HEK293 (cell line): ENCODE measurements at regions of chrX and their contacts with region 1.

Region 1: GRCh38 chrX:16719334-16720084 is at the start of gene SYAP1:
- H3K4me3 ChIP-seq: peak within 1 kb of the TSS; percentile 89
- H3K27ac ChIP-seq: peak within 1 kb of the TSS; percentile 81
- H3K4me1 ChIP-seq: no peaks in the 10 kb centered on the region; the same call in 1 of the 2 replicates
- CTCF ChIP-seq: peak; percentile 30

Region 2: GRCh38 chrX:16320765-16321355 is 398.6 kb before region 1 on chrX:
- CTCF ChIA-PET with region 1: no interaction called
- POLR2A ChIA-PET with region 1: no interaction called
- H3K4me3 ChIP-seq: no peak overlapping the region
- H3K27ac ChIP-seq: no peak overlapping the region
- H3K4me1 ChIP-seq: no peaks in the 10 kb centered on the region
- CTCF ChIP-seq: no peak

Region 3: GRCh38 chrX:16687514-16687913 is 32.0 kb before region 1 on chrX:
- CTCF ChIA-PET with region 1: no interaction called
- POLR2A ChIA-PET with region 1: no interaction called
- H3K4me3 ChIP-seq: no peak overlapping the region
- H3K27ac ChIP-seq: no peak overlapping the region
- H3K4me1 ChIP-seq: no peaks in the 10 kb centered on the region
- CTCF ChIP-seq: no peak

Region 4: GRCh38 chrX:16733013-16733412 is 13.5 kb after region 1 on chrX:
- CTCF ChIA-PET with region 1: interaction called, 5 read pairs
- POLR2A ChIA-PET with region 1: interaction called, 17 read pairs
- H3K4me3 ChIP-seq: no peak overlapping the region
- H3K27ac ChIP-seq: no peak overlapping the region
- H3K4me1 ChIP-seq: no peaks in the 10 kb centered on the region
- CTCF ChIP-seq: no peak

Region 5: GRCh38 chrX:16739581-16739980 is 20.1 kb after region 1 on chrX:
- CTCF ChIA-PET with region 1: interaction called, 5 read pairs
- POLR2A ChIA-PET with region 1: interaction called, 15 read pairs
- H3K4me3 ChIP-seq: no peak overlapping the region
- H3K27ac ChIP-seq: no peak overlapping the region
- H3K4me1 ChIP-seq: no peaks in the 10 kb centered on the region
- CTCF ChIP-seq: no peak

Region 6: GRCh38 chrX:16765594-16765993 is 46.1 kb after region 1 on chrX:
- CTCF ChIA-PET with region 1: no interaction called
- POLR2A ChIA-PET with region 1: interaction called, 36 read pairs
- H3K4me3 ChIP-seq: no peak overlapping the region
- H3K27ac ChIP-seq: no peak overlapping the region
- H3K4me1 ChIP-seq: no peaks in the 10 kb centered on the region
- CTCF ChIP-seq: no peak

Region 7: GRCh38 chrX:16771483-16772398 is 52.2 kb after region 1 on chrX:
- CTCF ChIA-PET with region 1: interaction called, 3 read pairs
- POLR2A ChIA-PET with region 1: interaction called, 36 read pairs
- H3K4me3 ChIP-seq: no peak overlapping the region
- H3K27ac ChIP-seq: peak overlapping the region; percentile 88
- H3K4me1 ChIP-seq: no peaks in the 10 kb centered on the region
- CTCF ChIP-seq: no peak

Region 8: GRCh38 chrX:16786139-16786790 is 66.8 kb after region 1 on chrX and contains the start of gene TXLNG:
- CTCF ChIA-PET with region 1: no interaction called
- POLR2A ChIA-PET with region 1: interaction called, 24 read pairs
- H3K4me3 ChIP-seq: peak within 1 kb of the TSS; percentile 76
- H3K27ac ChIP-seq: peak within 1 kb of the TSS; percentile 62
- H3K4me1 ChIP-seq: peaks cover 10% of the 10 kb centered on the region; the same call in 1 of the 2 replicates
- CTCF ChIP-seq: no peak